MCF 10A (cell line): ENCODE measurements at regions of chr3 and their contacts with region 1.

Region 1: DNA sequence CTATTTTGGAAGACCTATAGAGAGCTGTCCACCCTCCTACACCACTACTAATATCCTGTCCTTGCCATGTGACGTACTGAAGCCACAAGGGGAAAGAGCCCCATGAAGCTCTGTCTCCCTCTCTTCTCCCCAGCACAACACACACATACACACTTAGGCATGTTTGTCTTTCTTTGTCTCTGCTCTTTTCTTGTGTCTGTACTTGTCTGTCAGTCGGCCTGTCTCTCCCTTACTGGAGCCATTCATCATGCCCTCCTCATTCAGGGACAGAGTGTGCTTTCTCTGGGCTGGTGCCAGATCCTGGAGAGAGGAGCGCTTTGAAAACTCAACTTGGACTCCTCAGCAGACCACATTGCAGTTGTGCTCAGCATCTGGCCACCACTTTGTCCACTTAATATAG is 47.6 kb downstream of the PSMD6 start:
- DNase-seq: peak; percentile 94
- H3K4me3 Mint-ChIP-seq: peak overlapping the region; percentile 45
- H3K27ac Mint-ChIP-seq: peak overlapping the region; percentile 86
- H3K4me1 Mint-ChIP-seq: peaks cover 63% of the 10 kb centered on the region
- H3K27me3 Mint-ChIP-seq: no peaks in the 10 kb centered on the region
- CTCF ChIP-seq: no peak

Region 2: DNA sequence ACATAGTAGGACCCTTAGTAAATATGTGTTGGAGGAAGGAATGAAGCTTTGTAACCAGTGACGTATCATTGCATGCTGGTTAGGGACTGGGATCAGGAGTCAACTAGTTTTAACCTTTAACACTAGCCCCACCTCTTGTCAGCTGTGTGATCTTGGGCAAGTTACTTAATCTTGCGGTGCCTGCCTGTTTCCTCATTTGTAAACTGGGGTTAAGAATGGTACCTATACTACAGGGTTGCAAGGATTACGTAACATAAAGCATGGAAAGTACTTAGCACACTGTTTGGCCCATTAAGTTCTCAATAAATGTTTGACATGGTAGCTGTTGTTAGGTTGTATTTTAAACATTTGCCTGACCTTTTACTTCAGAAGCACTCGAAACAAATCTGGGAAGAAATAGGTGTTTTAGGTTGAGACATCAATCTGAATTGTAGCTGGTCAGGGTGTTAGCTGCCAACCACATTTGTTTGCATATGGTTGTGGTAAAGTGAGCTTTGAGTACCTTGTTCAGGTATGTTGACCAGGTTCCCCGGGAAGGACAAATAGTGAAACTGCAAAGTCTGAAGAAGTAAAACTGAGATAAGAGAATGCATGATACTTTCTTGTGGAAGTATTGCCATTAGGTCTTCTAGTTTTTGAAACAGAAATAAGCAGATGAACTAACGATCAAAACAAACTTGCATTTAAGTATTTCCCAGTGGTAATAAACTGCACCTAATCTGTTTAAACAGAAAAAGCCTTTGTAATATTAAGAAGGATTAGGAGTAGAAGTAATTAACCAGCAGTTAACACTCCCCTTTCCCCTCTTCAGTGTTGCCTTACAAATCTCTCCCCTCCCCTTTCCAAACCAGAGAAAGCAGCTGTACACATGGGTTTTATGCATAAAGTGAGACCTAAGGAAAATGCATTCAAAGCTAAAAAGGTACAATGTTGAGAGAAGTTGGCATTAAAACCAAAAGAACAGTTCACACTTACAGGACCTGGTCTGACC is 37.8 kb before region 1 on chr3:
- CTCF ChIA-PET with region 1: interaction called, 3 read pairs
- POLR2A ChIA-PET with region 1: interaction called, 33 read pairs
- intact Hi-C with region 1: no loop called
- DNase-seq: peak; percentile 66
- H3K4me3 Mint-ChIP-seq: no peak overlapping the region
- H3K27ac Mint-ChIP-seq: peak overlapping the region; percentile 57
- H3K4me1 Mint-ChIP-seq: peaks cover 44% of the 10 kb centered on the region
- H3K27me3 Mint-ChIP-seq: no peaks in the 10 kb centered on the region
- CTCF ChIP-seq: no peak

Region 3: GRCh38 chr3:63993653-63994079 is 17.9 kb after region 1 on chr3:
- CTCF ChIA-PET with region 1: interaction called, 359 read pairs
- POLR2A ChIA-PET with region 1: interaction called, 58 read pairs
- intact Hi-C with region 1: loop called (anchors 1 kb)
- DNase-seq: peak; percentile 77
- H3K4me3 Mint-ChIP-seq: no peak overlapping the region
- H3K27ac Mint-ChIP-seq: peak overlapping the region; percentile 23
- H3K4me1 Mint-ChIP-seq: no peaks in the 10 kb centered on the region
- H3K27me3 Mint-ChIP-seq: no peaks in the 10 kb centered on the region
- CTCF ChIP-seq: peak; percentile 83